ENCODE measurements at regions of chr1 and their contacts with region 1.

Region 1: DNA sequence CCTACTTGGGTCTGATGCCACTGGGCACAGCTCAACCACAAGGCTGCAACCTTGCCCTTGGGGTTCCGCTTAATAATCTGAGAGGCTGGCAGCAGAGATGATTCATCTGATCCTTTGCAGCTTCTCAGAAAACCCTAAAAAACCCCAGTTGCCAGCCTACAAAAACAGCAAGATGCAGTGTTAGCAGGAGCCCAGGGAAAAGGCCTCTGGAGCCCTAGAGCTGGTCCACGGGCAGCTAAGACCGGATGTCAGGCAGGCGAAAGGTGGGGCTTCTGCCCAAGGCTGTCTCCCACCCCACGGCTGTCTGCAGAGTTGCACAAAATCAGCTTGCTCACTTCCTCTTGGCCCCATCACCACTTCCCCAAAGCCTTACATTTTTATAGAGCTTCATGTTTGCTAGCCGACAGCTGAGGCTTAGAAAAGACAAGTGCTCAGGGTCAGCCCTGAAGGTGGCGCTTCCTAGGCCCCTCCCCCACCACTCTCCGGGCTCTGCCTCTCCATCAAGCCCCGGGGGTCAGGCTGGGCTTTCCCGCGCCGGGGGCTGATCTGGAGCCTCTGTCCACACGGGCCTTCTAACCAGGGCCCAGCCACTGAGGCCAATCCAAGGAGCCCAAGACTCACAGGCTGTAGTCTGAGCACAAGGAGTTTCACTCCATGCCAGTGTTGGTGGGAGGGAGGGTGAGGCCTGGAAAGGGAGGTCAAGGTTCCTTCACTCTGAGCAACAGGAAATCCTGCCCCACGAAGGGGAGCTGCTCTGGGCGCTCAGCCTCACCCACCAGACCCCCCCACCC is 4.2 kb upstream of the ADORA3 start:
- DNase-seq: peak; percentile 60
- H3K4me3 ChIP-seq: no peak overlapping the region
- H3K27ac ChIP-seq: no peak overlapping the region
- H3K4me1 ChIP-seq: peaks cover 15% of the 10 kb centered on the region
- H3K27me3 ChIP-seq: no peaks in the 10 kb centered on the region
- CTCF ChIP-seq: no peak

Region 2: DNA sequence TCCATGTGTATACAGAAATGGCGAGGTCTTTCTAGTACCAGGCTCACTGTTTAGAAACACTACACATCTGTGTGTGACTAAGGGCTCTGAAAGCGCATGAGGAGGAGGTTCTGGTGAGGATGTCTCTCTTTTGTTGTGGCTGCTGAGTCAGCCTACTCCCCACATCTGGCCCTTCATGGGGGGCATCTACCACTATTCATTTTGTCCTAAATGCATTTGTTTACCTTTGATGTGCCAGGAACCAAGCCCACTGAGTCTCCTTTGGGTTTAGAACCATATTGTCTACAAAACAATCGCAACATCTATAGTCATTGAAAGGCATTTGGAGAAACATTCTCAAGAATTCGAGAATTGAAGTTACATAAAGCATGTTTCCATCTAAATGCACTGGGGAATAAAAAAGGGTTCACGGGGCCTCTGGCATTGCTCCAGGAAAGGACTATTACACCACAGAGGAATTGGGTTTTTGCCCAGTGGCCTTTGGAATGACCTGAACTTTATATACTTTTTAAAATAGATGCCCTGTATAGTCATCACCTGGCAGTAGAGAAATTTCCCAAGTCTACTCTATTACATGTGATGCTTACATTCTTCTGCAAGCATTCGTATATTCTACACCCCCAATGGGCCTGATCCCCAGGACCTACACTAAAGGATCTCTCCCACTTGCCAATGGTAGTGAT is 30.9 kb after region 1 on chr1:
- CTCF ChIA-PET with region 1: no interaction called
- dilution Hi-C with region 1: loop called (anchors 5 kb)
- in situ Hi-C with region 1: no loop called
- intact Hi-C with region 1: no loop called
- DNase-seq: peak; percentile 12
- H3K4me3 ChIP-seq: no peak overlapping the region
- H3K27ac ChIP-seq: no peak overlapping the region
- H3K4me1 ChIP-seq: peaks cover 14% of the 10 kb centered on the region
- H3K27me3 ChIP-seq: no peaks in the 10 kb centered on the region
- CTCF ChIP-seq: no peak

Region 3: DNA sequence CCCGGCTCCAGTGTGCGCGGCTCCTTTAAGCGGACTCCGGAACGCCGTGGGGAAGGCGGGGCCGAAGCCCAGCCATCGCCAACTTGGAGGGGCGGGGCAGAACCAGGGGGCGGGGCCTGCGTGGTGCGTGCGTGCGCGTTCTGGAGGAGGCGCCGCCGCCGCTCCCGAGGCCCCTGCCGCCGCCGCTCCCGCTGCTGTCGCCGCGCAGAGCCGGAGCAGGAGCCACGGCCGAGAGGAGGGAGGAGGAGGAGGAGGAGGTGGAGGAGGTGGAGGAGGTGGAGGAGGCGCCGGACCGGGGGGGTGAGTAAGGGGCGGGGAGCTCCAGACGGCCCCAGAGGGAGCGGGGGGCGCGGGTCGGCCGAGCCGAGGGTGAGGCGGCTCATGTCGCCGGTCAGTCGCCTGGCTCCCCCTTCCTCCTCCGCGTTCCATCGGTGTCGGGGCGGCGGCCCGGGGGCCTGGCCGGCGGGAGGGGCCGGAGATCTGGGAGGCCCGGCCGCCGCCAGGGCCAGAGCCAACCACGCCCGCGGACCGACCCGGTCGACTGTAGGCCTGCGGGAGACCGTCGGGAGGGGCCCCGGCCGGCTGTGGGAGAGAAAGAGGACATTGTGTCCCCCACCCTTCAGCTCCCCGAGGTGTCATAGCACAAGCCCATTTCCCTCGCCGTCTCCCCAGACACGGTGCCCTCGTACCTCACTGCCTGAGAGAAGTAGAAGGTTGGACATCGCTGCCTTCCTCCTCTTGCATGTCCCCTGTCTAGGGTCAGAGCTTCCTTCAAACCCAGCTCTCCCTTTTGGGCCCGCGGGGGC is 112.2 kb after region 1 on chr1 and contains the start of gene RAP1A:
- CTCF ChIA-PET with region 1: interaction called, 8 read pairs
- dilution Hi-C with region 1: no loop called
- in situ Hi-C with region 1: no loop called
- intact Hi-C with region 1: loop called (anchors 1 kb)
- DNase-seq: peak; percentile 86
- H3K4me3 ChIP-seq: peak within 1 kb of the TSS; percentile 51 to 89 (median 83)
- H3K27ac ChIP-seq: peak within 1 kb of the TSS; percentile 42
- H3K4me1 ChIP-seq: peaks cover 6% of the 10 kb centered on the region
- H3K27me3 ChIP-seq: no peaks in the 10 kb centered on the region
- CTCF ChIP-seq: no peak
- total RNA-seq, gene RAP1A: 20.8 to 58.8 TPM

Region 4: DNA sequence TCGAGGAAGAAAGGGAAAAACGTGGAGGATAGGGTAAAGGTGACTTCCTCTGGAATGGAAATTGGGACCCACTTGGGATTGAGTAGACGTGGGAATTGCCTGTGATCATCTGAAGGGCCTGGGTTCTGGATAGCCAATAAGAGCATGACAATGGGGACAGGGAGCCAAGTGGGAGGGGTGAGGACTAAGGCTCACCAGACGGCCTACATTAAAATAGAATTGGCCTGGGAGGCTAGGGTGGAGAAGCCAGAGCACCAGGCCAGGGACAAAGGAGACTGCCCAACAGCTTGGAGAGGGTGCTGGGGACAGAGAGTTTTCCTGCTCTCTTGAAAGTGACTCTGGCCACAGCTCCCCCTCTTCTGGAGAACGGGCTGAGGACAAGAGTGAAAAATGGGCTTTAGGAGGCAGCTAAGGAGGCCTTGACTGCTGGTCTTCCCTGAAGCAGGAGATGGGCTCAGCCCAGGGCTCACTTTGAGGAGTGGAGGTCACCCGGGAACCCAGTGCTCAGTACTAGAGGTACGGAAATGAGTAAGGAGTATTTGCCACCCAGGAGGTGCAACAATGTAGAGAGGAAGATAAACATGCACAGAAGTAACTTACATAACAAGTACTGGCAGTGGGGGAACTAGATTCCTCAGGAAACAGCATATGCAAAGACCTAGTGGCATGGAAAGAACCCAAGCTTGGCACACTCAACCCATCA is 212.8 kb after region 1 on chr1:
- CTCF ChIA-PET with region 1: interaction called, 16 read pairs
- dilution Hi-C with region 1: no loop called
- in situ Hi-C with region 1: no loop called
- intact Hi-C with region 1: loop called (anchors 1 kb)
- DNase-seq: no peak
- H3K4me3 ChIP-seq: no peak overlapping the region
- H3K27ac ChIP-seq: no peak overlapping the region
- H3K4me1 ChIP-seq: peaks cover 23% of the 10 kb centered on the region
- H3K27me3 ChIP-seq: no peaks in the 10 kb centered on the region
- CTCF ChIP-seq: no peak

Region 5: GRCh38 chr1:111769517-111770146 is 262.0 kb after region 1 on chr1:
- CTCF ChIA-PET with region 1: no interaction called
- dilution Hi-C with region 1: no loop called
- in situ Hi-C with region 1: loop called in 1 of 2 experiments (anchors 10 kb)
- intact Hi-C with region 1: no loop called
- DNase-seq: peak; percentile 42
- H3K4me3 ChIP-seq: no peak overlapping the region
- H3K27ac ChIP-seq: no peak overlapping the region
- H3K4me1 ChIP-seq: no peaks in the 10 kb centered on the region
- H3K27me3 ChIP-seq: no peaks in the 10 kb centered on the region
- CTCF ChIP-seq: peak; percentile 74 to 84